Heart left ventricle (tissue), 16 donors: ENCODE measurements at regions of chr2 and their contacts with region 1.

Region 1: DNA sequence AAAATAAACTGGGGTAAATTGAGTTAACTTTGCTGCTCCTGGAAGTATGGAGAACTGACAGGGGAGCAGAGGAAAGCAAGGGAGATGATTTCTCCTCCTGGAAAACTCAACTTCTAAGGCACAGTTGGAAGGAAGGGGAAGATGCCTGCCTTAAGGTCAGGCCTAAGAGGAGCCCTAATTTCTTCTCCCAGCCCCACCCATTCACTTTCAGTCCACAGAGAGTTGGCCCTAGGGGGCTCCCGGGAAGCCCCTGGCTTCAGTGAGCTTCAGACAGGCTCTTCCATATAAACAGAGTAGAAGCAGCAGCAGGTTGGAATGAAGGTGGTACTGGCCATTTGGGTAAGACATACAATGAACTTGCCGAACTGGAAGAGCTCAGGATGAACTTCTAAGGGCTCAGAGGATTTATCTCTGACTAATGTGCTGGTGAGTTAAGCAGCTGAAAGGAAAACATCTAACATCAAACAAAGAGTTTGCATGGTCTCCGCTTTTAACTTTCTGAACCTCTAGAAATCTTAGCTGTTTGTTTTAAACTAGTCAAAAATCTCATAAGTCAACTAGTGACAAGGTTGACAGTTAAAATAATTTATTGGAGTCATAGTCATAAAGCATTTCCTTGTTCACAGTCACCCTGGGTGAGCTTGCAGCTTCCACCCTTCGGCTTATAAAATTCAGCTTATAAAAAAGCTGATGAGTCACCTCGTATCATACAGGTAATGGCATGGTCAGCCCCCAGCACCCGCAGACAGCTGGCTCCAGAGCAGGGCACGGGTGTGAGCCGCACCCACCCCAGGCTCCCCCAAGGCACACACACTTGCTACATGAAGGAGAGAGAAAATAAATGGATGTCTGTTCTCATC is 9.8 kb downstream of the MALL start:
- DNase-seq: no peak
- ATAC-seq: no peak
- H3K4me3 ChIP-seq: no peak overlapping the region
- H3K27ac ChIP-seq: peak overlapping the region in 8 of 12 donors; percentile 2 to 44 (median 28)
- H3K4me1 ChIP-seq: peaks cover 0 to 57% (median 22%) of the 10 kb centered on the region in 12 donors
- H3K27me3 ChIP-seq: no peaks in the 10 kb centered on the region
- CTCF ChIP-seq: no peak
- POLR2A ChIP-seq: no peak

Region 2: DNA sequence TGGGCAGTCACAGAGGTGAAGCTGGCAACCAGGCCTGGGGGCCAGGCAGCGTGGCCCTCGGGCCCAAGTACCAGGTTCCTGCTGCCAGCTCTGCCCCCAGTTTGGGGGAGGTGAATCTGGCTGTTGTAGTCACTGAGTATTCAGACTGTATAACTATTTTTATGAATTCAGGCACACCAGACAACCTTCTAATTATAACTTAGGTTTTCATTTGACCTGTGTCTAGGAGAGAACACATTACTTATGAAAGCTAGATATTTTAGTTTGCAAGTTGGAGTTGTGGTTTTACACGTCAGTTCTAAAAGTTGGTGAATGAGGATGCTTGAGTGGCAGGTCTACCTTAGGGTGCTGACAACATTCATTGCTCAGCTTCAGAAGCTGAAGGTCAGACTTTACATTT is 1499.9 kb before region 1 on chr2:
- intact Hi-C with region 1: no loop called
- DNase-seq: no peak
- ATAC-seq: peak in 2 of 4 donors; percentile 34 to 40
- H3K4me3 ChIP-seq: no peak overlapping the region
- H3K27ac ChIP-seq: peak overlapping the region in 9 of 12 donors; percentile 16 to 62 (median 45)
- H3K4me1 ChIP-seq: peaks cover 0 to 31% (median 13%) of the 10 kb centered on the region in 12 donors
- H3K27me3 ChIP-seq: no peaks in the 10 kb centered on the region
- CTCF ChIP-seq: no peak
- POLR2A ChIP-seq: no peak

Region 3: DNA sequence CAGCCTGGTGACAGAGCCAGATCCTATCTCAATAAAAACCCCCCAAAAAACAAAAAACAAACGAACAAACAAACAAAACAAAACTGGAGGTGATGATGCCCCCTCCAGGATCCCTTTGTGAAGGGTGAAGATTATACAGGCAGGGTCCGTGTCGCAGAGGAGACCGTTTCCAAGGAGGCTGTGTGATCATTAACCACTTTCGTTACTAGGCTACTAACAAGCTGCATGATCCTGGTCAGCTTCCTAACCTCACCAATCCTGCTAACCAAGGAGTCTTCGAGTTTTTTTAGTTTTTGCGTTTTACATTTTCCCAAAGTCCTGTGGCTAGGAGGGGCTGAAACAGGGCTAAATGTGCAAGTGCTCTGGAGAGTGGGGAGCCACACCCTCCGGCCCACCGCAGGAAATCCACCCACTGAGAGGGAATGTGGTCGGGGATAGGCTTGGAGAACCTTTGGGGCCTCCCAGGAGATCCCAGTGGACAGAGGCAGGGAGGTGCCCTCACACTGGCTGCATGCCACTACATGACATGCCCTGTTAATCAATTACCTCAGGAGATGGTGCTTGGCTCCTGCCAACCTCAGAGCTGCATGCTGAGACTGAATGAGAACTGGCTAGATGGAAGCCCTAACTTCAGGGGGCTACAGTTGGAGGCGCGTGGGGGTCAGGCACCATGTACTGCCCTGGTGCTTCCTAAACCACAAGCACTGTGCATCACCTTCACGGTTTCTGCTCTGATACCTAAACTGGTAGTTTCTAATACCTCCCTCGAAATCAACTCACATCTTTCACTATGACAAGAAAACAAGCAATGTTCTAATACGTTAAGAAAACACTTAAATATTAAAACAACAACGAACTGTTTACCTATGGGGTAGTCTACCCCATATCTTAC is 379.2 kb before region 1 on chr2:
- intact Hi-C with region 1: no loop called
- DNase-seq: no peak
- ATAC-seq: no peak
- H3K4me3 ChIP-seq: no peak overlapping the region
- H3K27ac ChIP-seq: no peak overlapping the region
- H3K4me1 ChIP-seq: peaks cover 0 to 7% (median 0%) of the 10 kb centered on the region in 12 donors
- H3K27me3 ChIP-seq: no peaks in the 10 kb centered on the region
- CTCF ChIP-seq: no peak
- POLR2A ChIP-seq: no peak

Region 4: DNA sequence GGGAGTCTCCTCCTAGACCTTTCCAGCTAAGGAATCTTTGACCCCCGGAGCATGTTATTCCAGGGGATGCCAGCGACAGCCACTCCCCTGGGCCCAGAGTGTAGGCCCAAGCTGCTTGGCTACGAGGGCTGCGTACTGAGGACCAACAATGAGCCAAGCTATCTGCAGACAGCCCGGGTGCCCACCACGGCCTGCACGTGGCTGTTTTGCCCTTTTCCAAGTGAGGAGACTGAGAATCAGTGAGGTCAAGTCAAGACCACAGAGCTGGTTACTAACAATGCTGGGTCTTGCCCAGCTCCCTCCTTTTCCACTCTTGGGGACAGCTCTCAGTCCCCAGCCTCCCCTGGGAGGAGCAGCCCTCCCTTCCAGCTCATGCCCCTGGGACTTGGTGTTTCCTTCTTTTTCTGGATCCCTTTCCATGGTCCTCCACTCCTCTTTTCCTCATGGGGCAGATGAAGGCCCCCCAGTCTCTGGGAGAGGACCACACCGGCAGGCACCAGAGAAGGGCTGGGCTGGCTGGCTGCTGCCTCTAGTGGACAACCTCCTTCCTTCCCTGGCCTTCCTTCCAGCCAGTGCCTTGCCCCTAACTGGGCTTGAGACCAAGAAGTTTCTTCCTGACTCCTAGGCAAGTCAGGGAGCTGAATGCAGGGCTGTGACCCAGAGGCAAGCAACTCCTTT is 10.3 kb after region 1 on chr2:
- intact Hi-C with region 1: loop called in 1 of 10 experiments (anchors 1 kb)
- DNase-seq: peak; percentile 64 to 76 (median 66)
- ATAC-seq: peak; percentile 72 to 83 (median 75)
- H3K4me3 ChIP-seq: peak overlapping the region; percentile 20 to 69 (median 56)
- H3K27ac ChIP-seq: peak overlapping the region; percentile 30 to 88 (median 84)
- H3K4me1 ChIP-seq: peaks cover 0 to 50% (median 23%) of the 10 kb centered on the region in 12 donors
- H3K27me3 ChIP-seq: peaks cover 0 to 27% (median 17%) of the 10 kb centered on the region in 9 donors
- CTCF ChIP-seq: peak; percentile 25 to 73 (median 52)
- POLR2A ChIP-seq: no peak

Region 5: GRCh38 chr2:110143982-110144381 is 38.1 kb after region 1 on chr2:
- intact Hi-C with region 1: loop called in 1 of 10 experiments (anchors 2 kb)
- DNase-seq: no peak
- ATAC-seq: no peak
- H3K4me3 ChIP-seq: no peak overlapping the region
- H3K27ac ChIP-seq: no peak overlapping the region
- H3K4me1 ChIP-seq: peaks cover 0 to 5% (median 0%) of the 10 kb centered on the region in 12 donors
- H3K27me3 ChIP-seq: no peaks in the 10 kb centered on the region
- CTCF ChIP-seq: no peak
- POLR2A ChIP-seq: no peak